MCF 10A (cell line): ENCODE measurements at regions of chr11 and their contacts with region 1.

Region 1: GRCh38 chr11:1882519-1883238 is 9.0 kb downstream of the PRR33 start:
- DNase-seq: peak; percentile 79
- H3K4me3 Mint-ChIP-seq: no peak overlapping the region
- H3K27ac Mint-ChIP-seq: no peak overlapping the region
- H3K4me1 Mint-ChIP-seq: peaks cover 2% of the 10 kb centered on the region
- H3K27me3 Mint-ChIP-seq: no peaks in the 10 kb centered on the region
- CTCF ChIP-seq: peak; percentile 85

Region 2: GRCh38 chr11:1739576-1739975 is 143.1 kb before region 1 on chr11:
- CTCF ChIA-PET with region 1: no interaction called
- POLR2A ChIA-PET with region 1: no interaction called
- intact Hi-C with region 1: no loop called
- DNase-seq: no peak
- H3K4me3 Mint-ChIP-seq: no peak overlapping the region
- H3K27ac Mint-ChIP-seq: no peak overlapping the region
- H3K4me1 Mint-ChIP-seq: no peaks in the 10 kb centered on the region
- H3K27me3 Mint-ChIP-seq: peaks cover 40% of the 10 kb centered on the region
- CTCF ChIP-seq: no peak

Region 3: GRCh38 chr11:1917671-1918516 is 35.2 kb after region 1 on chr11:
- CTCF ChIA-PET with region 1: interaction called, 5 read pairs
- POLR2A ChIA-PET with region 1: no interaction called
- intact Hi-C with region 1: loop called (anchors 5 kb)
- DNase-seq: no peak
- H3K4me3 Mint-ChIP-seq: no peak overlapping the region
- H3K27ac Mint-ChIP-seq: no peak overlapping the region
- H3K4me1 Mint-ChIP-seq: no peaks in the 10 kb centered on the region
- H3K27me3 Mint-ChIP-seq: peaks cover 25% of the 10 kb centered on the region
- CTCF ChIP-seq: peak; percentile 38

Region 4: DNA sequence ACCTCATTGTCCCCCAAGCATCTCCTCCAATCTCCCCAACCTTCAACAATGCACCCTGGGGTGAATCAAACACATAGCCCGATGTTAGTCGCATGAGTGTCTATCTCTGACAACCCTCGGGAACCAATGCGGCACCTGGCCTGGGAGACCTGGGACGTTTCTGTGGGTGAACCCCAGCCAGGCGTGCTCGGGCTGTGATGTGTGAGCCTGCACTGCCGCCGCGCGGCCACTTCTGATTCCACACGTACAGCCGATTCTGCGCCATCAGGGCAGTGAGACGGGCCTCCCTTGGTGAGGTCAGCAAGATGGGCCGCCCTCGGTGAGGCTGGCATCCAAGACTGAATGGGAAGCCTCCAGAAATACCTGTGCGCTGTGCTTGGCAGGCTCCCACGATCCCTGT is 120.1 kb after region 1 on chr11:
- CTCF ChIA-PET with region 1: interaction called, 15 read pairs
- POLR2A ChIA-PET with region 1: no interaction called
- intact Hi-C with region 1: no loop called
- DNase-seq: no peak
- H3K4me3 Mint-ChIP-seq: no peak overlapping the region
- H3K27ac Mint-ChIP-seq: no peak overlapping the region
- H3K4me1 Mint-ChIP-seq: no peaks in the 10 kb centered on the region
- H3K27me3 Mint-ChIP-seq: no peaks in the 10 kb centered on the region
- CTCF ChIP-seq: no peak